Mammary epithelial cell (primary cell): ENCODE measurements at regions of chr12 and their contacts with region 1.

Region 1: DNA sequence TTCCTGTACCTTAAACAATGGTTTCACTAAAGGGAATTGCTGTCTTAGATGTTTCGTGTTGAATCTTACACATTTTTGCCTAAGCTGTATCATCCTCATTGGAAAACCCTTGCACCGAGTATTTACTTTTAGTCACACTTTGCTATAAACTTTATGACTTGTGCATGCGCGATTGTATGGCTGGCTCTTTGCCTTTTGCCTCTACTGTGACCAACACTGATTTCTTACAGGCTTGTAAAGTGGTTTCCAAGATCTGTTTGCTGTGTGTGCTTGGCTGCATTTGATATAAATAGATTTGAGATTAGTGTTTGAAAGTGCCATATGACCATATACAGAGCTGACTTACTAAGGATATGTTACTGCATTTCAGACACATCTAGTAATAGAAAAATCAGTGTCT is 40.5 kb downstream of the RASSF3 start:
- DNase-seq: no peak
- H3K4me3 ChIP-seq: no peak overlapping the region
- H3K27ac ChIP-seq: no peak overlapping the region
- H3K4me1 ChIP-seq: peaks cover 5% of the 10 kb centered on the region
- H3K27me3 ChIP-seq: no peaks in the 10 kb centered on the region
- CTCF ChIP-seq: no peak

Region 2: GRCh38 chr12:64625243-64626077 is 25.3 kb before region 1 on chr12:
- CTCF ChIA-PET with region 1: no interaction called
- dilution Hi-C with region 1: no loop called
- in situ Hi-C with region 1: no loop called
- intact Hi-C with region 1: loop called (anchors 2 kb)
- DNase-seq: peak; percentile 95
- H3K4me3 ChIP-seq: peak overlapping the region; percentile 42 to 53 (median 52)
- H3K27ac ChIP-seq: peak overlapping the region; percentile 98
- H3K4me1 ChIP-seq: peaks cover 16% of the 10 kb centered on the region
- H3K27me3 ChIP-seq: no peaks in the 10 kb centered on the region
- CTCF ChIP-seq: no peak